IMR-90 (cell line): ENCODE measurements at regions of chr19 and their contacts with region 1.

Region 1: DNA sequence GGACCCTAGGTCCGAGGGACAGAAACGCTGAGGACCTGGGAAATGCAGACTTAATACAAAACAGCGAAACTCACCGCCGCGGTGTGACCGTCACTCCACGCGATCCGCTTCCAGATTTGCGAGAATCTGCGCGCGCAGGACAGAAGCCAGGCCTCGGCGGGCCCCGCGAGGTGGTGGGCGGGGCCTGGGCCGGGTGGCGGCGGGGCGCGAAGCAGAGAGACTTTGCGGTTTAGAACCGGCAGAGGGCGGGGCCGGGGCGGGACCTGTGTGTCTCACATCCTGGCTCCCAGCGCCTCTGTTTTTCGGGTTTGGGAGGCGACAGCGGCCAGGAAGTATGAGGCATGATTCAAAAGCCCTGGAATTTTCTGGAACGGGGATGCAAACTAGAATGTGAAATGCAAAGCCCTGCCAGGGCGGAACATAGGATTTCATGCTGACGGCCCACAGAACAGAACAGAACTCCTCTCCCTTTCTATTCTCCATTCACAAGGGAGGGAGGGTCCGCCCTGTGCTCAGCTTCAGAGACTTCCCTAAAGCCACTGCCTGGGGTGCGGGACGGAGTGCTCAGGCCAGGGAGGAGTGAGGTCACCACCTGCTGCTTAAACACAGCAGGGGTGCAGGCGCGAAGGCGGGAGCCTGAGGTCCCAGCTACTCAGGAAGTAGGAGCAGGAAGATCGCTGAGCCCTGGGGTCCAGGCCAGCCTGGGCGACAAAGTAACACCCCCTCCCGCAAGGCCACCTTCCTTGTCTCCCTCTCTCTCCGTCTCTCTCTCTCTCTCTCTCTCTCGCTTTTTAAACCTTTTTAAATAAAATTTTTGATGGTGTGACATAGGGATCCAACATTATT is 44.3 kb downstream of the ZNF611 start:
- DNase-seq: peak; percentile 93
- ATAC-seq: peak; percentile 99
- H3K4me3 ChIP-seq: peak overlapping the region; percentile 79
- H3K27ac ChIP-seq: peak overlapping the region; percentile 96
- H3K4me1 ChIP-seq: peaks cover 7% of the 10 kb centered on the region
- H3K27me3 ChIP-seq: no peaks in the 10 kb centered on the region
- CTCF ChIP-seq: no peak
- POLR2A ChIP-seq: peak; percentile 64
- RAD21 ChIP-seq: no peak

Region 2: GRCh38 chr19:52601025-52601973 is 89.3 kb before region 1 on chr19:
- CTCF ChIA-PET with region 1: no interaction called
- POLR2A ChIA-PET with region 1: no interaction called
- dilution Hi-C with region 1: no loop called
- in situ Hi-C with region 1: no loop called
- intact Hi-C with region 1: no loop called
- DNase-seq: peak; percentile 87
- ATAC-seq: peak; percentile 100
- H3K4me3 ChIP-seq: peak overlapping the region; percentile 94
- H3K27ac ChIP-seq: peak overlapping the region; percentile 63
- H3K4me1 ChIP-seq: peaks cover 5% of the 10 kb centered on the region; the same call in 1 of the 2 replicates
- H3K27me3 ChIP-seq: no peaks in the 10 kb centered on the region
- CTCF ChIP-seq: peak; percentile 34; the same call in 1 of the 2 replicates
- POLR2A ChIP-seq: no peak
- RAD21 ChIP-seq: 0 out of 2 replicates have a peak, but pooled peaks have one; percentile 25

Region 3: GRCh38 chr19:52622261-52622660 is 68.3 kb before region 1 on chr19:
- CTCF ChIA-PET with region 1: no interaction called
- POLR2A ChIA-PET with region 1: no interaction called
- dilution Hi-C with region 1: no loop called
- in situ Hi-C with region 1: no loop called
- intact Hi-C with region 1: no loop called
- DNase-seq: no peak
- ATAC-seq: no peak
- H3K4me3 ChIP-seq: no peak overlapping the region
- H3K27ac ChIP-seq: no peak overlapping the region
- H3K4me1 ChIP-seq: no peaks in the 10 kb centered on the region
- H3K27me3 ChIP-seq: no peaks in the 10 kb centered on the region
- CTCF ChIP-seq: no peak
- POLR2A ChIP-seq: no peak
- RAD21 ChIP-seq: no peak

Region 4: DNA sequence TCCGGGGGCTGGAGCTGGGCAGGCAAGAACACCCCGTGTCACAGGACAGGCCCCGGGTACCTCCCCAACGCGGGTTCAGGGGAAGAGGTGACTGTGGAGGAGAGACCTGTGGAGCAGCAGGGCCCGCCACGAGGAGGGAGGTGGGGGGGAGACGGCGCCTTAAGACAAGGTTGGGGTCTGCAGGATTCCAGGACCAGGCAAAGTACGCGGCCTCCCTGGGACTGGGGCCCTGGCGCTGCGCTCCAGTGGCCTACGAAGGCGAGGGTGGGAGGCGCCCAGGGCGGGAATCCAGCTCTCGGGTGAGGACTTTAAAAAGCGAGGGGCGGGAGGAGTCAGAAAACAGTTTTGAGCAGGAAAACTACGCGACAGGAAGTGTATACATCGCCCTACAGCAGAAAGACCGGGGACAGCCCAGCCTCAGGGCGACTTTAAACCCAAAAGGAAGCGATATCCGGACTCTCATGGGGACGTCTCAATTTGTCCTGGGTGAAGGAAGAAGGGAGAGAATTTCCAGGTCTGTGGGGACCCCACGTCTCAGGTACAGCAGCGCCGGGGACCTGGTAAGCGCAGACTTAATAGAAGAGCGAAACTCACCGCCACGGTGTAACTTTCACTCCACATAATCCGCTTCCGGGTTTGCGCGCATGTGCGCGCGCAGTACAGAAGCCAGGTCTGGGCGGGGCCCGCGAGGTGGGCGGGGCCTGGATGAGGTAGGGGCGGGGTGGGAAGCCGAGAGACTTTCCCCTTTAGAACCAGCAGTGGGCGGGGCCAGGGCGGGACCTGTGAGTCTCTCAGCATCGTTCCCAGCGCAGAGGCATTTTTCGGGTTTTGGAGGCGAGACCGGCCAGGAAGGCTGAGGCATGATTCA is 52.6 kb before region 1 on chr19 and contains the start of gene ZNF83:
- CTCF ChIA-PET with region 1: no interaction called
- POLR2A ChIA-PET with region 1: no interaction called
- dilution Hi-C with region 1: no loop called
- in situ Hi-C with region 1: no loop called
- intact Hi-C with region 1: loop called (anchors 2 kb)
- DNase-seq: peak; percentile 91
- ATAC-seq: peak; percentile 98
- H3K4me3 ChIP-seq: peak within 1 kb of the TSS; percentile 85
- H3K27ac ChIP-seq: peak within 1 kb of the TSS; percentile 90
- H3K4me1 ChIP-seq: peaks cover 3% of the 10 kb centered on the region; the same call in 1 of the 2 replicates
- H3K27me3 ChIP-seq: no peaks in the 10 kb centered on the region
- CTCF ChIP-seq: no peak
- POLR2A ChIP-seq: peak; percentile 85
- RAD21 ChIP-seq: no peak
- total RNA-seq, gene ZNF83: 36.9 and 42.8 TPM in 2 replicates

Region 5: GRCh38 chr19:52734893-52735661 is 44.5 kb after region 1 on chr19 and contains the start of gene ZNF611:
- CTCF ChIA-PET with region 1: no interaction called
- POLR2A ChIA-PET with region 1: no interaction called
- dilution Hi-C with region 1: no loop called
- in situ Hi-C with region 1: no loop called
- intact Hi-C with region 1: loop called (anchors 5 kb)
- DNase-seq: peak; percentile 88
- ATAC-seq: peak; percentile 99
- H3K4me3 ChIP-seq: peak within 1 kb of the TSS; percentile 89
- H3K27ac ChIP-seq: peak within 1 kb of the TSS; percentile 85
- H3K4me1 ChIP-seq: no peaks in the 10 kb centered on the region; the same call in 1 of the 2 replicates
- H3K27me3 ChIP-seq: no peaks in the 10 kb centered on the region
- CTCF ChIP-seq: peak; percentile 27
- POLR2A ChIP-seq: peak; percentile 77; the same call in 1 of the 2 replicates
- RAD21 ChIP-seq: 0 out of 2 replicates have a peak, but pooled peaks have one; percentile 26
- total RNA-seq, gene ZNF611: 8.1 and 8.8 TPM in 2 replicates